ENCODE measurements at regions of chr4 and their contacts with region 1.

Region 1: DNA sequence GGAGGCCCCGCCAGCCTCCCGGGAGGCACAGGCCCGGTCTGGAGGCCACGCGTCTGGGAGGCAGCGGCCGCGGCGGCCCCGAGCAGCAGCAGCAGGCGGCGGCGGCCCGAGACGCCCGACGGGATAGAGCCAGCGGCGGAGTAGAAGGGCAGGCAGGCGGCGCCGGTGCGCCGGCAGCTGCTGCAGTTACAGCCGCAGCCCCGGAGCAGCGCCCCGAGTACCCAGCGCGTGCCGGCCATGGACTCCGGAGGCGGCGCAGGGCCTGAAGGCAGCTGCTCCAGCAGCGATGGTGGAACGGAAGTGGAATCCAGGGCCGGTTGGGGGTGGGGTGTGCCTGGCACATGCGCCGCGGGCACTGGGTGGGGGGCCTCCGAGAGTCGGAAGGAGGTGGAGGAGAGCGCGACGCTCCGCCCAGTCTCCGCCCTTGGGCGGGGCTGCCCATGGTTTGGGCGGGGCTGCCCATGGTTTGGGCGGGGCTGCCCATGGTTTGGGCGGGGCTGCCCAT is at the start of gene GRSF1:
- DNase-seq: peak; percentile 97
- total RNA-seq, gene GRSF1: 83.5 TPM

Region 2: DNA sequence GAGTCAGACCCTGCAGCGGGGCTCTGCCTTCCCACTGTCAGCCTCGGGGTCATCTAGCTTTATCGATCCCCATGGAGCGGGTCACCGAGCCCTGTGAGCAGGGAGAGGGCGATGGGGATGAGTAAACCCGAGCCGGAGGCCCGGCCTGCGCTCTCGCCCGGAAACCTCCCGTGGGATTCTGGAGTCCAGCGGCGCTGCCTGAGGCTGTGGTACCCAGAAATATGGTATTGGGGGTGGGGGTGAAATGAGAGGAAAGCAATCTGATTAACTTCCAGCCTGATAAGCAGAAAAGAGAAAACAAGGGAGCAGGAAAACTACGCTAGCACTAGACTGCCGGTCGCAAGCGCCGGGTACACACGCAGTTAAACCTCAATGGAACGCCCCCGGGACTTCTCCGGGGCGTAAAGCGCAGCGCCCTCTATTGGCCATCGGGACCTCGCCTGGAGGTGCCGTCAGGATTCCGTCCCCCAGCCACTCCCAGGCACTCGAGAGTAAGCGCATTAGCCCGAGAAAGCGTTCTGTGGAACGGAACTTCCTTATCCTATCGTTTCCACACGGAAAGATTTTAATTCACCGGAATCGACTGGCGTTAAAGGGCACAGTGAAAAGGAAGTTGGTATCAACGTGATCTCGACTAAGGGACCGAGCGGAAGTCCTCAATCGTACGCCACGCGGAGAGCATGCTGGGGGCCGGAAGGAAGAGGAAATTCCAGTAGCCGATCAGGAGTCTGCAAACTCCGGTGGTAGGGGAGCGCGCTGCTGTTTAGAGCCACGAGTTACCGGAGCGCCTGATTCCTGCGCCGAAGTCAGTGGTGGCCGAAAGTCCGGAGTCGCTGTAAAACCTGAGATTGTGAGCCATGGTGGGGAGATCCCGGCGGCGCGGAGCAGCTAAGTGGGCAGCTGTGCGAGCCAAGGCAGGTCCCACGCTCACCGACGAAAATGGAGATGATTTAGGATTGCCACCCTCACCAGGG is 151.5 kb before region 1 on chr4 and contains the start of gene UTP3:
- intact Hi-C with region 1: loop called (anchors 1 kb)
- DNase-seq: peak; percentile 97
- total RNA-seq, gene UTP3: 22.8 TPM

Region 3: GRCh38 chr4:70704331-70705145 is 135.1 kb before region 1 on chr4:
- intact Hi-C with region 1: loop called (anchors 2 kb)
- DNase-seq: peak; percentile 90

Region 4: DNA sequence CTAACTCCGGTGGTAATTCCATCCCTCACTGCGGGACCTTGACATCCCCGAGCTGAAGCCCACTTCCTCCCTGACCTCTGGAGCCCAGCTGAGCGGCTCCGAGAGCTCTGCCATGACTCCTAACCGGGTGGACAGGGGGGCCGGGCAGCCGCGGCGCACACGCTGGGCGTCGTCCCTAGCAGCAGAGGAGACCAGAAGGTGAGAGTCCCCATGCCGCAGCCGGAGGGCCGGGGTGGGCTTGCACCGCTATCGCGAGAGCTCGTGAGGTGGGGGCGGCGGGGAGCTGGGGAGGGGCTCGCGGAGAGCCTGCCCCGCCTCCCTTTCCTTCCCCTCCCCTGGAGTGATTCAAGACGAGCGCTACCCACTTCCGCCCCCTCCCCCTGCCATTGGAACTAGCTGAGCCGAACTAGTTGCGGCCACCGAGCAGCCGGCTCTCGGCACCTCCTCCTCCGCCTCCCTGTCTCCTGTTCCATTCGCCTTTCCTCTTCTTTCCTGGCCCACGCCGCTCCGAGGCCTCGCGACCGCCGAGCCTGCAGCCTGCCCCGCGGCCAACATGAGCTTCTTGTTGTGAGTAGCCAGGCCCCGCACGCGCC is 62.4 kb after region 1 on chr4 and contains the start of gene MOB1B:
- intact Hi-C with region 1: loop called (anchors 2 kb)
- DNase-seq: peak; percentile 94
- total RNA-seq, gene MOB1B: 23.0 TPM

Region 5: GRCh38 chr4:70979445-70980008 is 139.9 kb after region 1 on chr4:
- intact Hi-C with region 1: no loop called
- DNase-seq: no peak

Region 6: DNA sequence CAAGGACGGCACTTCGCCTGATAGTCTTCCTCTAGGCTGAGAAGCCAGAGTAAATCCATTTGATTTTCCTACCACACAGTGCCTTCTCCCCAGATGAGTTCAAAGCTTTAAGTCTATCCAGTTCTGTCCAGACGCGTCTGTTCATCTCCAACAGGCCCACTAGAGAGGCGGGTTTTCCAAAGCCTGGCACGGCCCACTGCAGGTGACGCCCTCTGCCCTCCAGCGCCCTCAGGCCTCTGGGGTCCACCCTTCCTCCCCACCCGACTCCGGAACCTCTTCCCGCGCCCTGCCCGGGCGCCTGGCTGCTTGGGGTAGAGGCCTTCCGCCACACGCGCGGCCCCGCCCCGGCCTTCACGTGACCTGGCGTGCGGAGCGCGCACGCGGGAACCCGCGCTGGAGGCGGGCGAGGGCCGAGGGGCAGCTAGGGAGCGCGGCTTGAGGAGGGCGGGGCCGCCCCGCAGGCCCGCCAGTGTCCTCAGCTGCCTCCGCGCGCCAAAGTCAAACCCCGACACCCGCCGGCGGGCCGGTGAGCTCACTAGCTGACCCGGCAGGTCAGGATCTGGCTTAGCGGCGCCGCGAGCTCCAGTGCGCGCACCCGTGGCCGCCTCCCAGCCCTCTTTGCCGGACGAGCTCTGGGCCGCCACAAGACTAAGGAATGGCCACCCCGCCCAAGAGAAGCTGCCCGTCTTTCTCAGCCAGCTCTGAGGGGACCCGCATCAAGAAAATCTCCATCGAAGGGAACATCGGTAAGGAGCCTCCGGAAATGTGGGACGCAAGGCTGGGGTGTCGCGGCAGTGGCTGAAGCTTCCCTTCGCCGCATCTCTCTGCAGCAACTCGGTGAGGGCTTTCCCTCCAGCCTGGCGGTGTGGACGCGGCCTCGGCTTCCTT is 153.8 kb after region 1 on chr4 and contains the start of gene DCK:
- intact Hi-C with region 1: loop called (anchors 5 kb)
- DNase-seq: peak; percentile 95
- total RNA-seq, gene DCK: 7.1 TPM

Measured in cardiac septum (tissue), 1 donor.